Natural killer cell (primary cell): ENCODE measurements at regions of chr7 and their contacts with region 1.

Region 1: DNA sequence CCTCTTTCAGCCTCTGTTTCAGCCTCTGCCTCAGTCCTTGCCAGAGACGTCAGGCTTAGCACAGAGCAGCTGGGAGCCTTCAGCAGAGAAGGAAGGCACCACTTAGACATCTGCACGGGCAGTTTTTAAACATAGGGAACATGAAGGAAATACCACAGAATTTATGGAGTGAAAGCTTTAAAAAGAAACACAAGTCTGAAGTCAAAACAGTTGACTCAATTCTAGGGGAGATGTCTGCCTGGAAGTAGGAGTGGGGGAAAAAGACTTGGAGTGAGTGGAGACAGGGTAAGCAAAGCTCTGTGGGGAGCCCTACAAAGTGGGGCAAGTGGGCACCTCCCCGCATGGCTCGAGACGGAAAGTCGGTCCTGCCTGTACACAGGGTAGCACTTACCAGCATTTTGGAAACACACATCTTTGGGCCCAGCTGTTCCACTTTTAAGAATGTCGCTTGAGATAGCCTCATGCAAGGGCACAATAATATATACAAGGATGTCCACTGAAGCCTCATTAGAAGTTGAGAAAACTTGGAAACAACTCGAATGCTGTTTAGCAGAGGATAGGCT is 5.0 kb upstream of the TBXAS1 start:
- DNase-seq: no peak
- ATAC-seq: no peak
- H3K4me3 ChIP-seq: no peak overlapping the region
- H3K4me3 Mint-ChIP-seq: no peak overlapping the region
- H3K27ac ChIP-seq: no peak overlapping the region
- H3K27ac Mint-ChIP-seq: no peak overlapping the region
- H3K4me1 ChIP-seq: peaks cover 30% of the 10 kb centered on the region
- H3K4me1 Mint-ChIP-seq: peaks cover 11 to 22% of the 10 kb centered on the region in 2 donors
- H3K27me3 ChIP-seq: no peaks in the 10 kb centered on the region
- H3K27me3 Mint-ChIP-seq: no peaks in the 10 kb centered on the region
- CTCF ChIP-seq: no peak

Region 2: GRCh38 chr7:139855498-139856270 is 31.6 kb after region 1 on chr7:
- intact Hi-C with region 1: loop called (anchors 2 kb)
- DNase-seq: peak in 1 of 2 donors; percentile 33
- ATAC-seq: peak; percentile 58 to 79 (median 60)
- H3K4me3 ChIP-seq: no peak overlapping the region
- H3K4me3 Mint-ChIP-seq: peak overlapping the region; percentile 72
- H3K27ac ChIP-seq: peak overlapping the region; percentile 79
- H3K27ac Mint-ChIP-seq: peak overlapping the region; percentile 87 to 90
- H3K4me1 ChIP-seq: peaks cover 58% of the 10 kb centered on the region
- H3K4me1 Mint-ChIP-seq: peaks cover 65 to 77% of the 10 kb centered on the region in 2 donors
- H3K27me3 ChIP-seq: no peaks in the 10 kb centered on the region
- H3K27me3 Mint-ChIP-seq: no peaks in the 10 kb centered on the region
- CTCF ChIP-seq: no peak

Region 3: GRCh38 chr7:139869886-139870285 is 45.8 kb after region 1 on chr7:
- intact Hi-C with region 1: loop called (anchors 1 kb)
- DNase-seq: no peak
- ATAC-seq: no peak
- H3K4me3 ChIP-seq: no peak overlapping the region
- H3K4me3 Mint-ChIP-seq: peak overlapping the region; percentile 52
- H3K27ac ChIP-seq: no peak overlapping the region
- H3K27ac Mint-ChIP-seq: peak overlapping the region; percentile 70 to 83
- H3K4me1 ChIP-seq: peaks cover 41% of the 10 kb centered on the region
- H3K4me1 Mint-ChIP-seq: peaks cover 52 to 58% of the 10 kb centered on the region in 2 donors
- H3K27me3 ChIP-seq: no peaks in the 10 kb centered on the region
- H3K27me3 Mint-ChIP-seq: no peaks in the 10 kb centered on the region
- CTCF ChIP-seq: no peak

Region 4: DNA sequence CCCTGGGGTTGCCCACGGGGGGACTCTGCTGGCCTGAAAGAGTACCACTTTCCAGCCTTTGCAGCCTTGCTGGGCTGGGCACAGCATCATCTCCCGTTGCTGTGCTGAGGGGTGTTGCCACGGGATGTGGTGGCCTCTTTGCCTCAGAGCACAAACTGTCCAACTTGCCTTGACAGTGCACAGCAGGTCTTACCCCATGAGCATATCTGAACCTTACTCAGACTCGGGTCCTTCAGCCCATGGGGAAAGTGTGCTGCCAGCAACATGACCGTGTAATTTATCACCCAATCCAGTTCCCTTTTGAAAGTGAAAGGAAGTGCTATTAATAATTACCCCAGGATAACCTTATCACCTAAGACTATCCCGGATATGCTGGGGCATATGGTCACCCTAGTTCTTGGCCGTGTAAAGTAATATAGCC is 51.8 kb after region 1 on chr7:
- intact Hi-C with region 1: loop called (anchors 1 kb)
- DNase-seq: peak in 1 of 2 donors; percentile 56
- ATAC-seq: peak; percentile 66 to 80 (median 79)
- H3K4me3 ChIP-seq: no peak overlapping the region
- H3K4me3 Mint-ChIP-seq: peak overlapping the region; percentile 74
- H3K27ac ChIP-seq: peak overlapping the region; percentile 88
- H3K27ac Mint-ChIP-seq: peak overlapping the region; percentile 83
- H3K4me1 ChIP-seq: peaks cover 48% of the 10 kb centered on the region
- H3K4me1 Mint-ChIP-seq: peaks cover 73 to 81% of the 10 kb centered on the region in 2 donors
- H3K27me3 ChIP-seq: no peaks in the 10 kb centered on the region
- H3K27me3 Mint-ChIP-seq: no peaks in the 10 kb centered on the region
- CTCF ChIP-seq: no peak

Region 5: GRCh38 chr7:139889186-139889871 is 65.3 kb after region 1 on chr7:
- intact Hi-C with region 1: loop called (anchors 2 kb)
- DNase-seq: no peak
- ATAC-seq: no peak
- H3K4me3 ChIP-seq: no peak overlapping the region
- H3K4me3 Mint-ChIP-seq: no peak overlapping the region
- H3K27ac ChIP-seq: no peak overlapping the region
- H3K27ac Mint-ChIP-seq: peak overlapping the region; percentile 92 to 94
- H3K4me1 ChIP-seq: peaks cover 22% of the 10 kb centered on the region
- H3K4me1 Mint-ChIP-seq: peaks cover 57 to 60% of the 10 kb centered on the region in 2 donors
- H3K27me3 ChIP-seq: no peaks in the 10 kb centered on the region
- H3K27me3 Mint-ChIP-seq: no peaks in the 10 kb centered on the region
- CTCF ChIP-seq: no peak

Region 6: DNA sequence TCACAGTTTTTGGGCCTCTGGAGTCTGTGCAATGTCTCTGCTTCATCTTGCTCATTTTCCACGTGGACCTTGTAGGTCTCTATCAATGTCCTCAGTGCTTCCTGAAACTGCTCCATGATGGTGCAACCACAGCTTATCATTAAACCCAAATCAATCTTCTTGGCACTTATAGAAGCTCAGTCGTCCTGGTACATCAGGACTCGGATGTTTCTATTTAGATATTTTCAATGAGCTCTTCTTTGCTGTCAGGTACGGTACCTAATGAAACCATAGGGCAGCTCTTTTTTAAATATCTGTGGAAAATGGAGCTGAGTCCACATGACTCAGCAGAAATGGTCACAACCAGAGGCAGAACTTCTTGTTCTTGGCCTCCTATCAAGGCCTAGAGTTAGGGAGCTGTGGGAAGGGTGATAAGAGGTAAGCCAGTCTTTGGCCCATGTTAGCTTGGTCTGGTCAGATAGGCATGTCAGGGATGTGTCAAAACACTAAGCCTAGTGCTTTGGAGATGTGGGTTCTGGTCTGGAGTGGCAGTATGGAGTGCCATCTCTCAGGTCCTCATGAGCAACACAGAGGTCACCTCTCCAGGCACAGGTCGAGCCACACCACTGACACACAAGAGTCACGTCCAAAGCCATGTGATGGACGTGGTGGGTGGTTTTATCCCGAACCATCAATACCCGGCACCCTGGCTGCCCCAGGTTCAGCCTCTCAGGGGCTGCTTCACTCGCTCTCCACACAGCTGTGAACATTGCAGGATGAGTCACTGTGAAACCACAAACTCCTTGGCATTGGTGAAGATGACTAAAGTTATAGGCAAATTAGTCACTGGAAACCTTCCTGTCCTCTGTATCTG is 92.0 kb after region 1 on chr7:
- intact Hi-C with region 1: loop called (anchors 1 kb)
- DNase-seq: peak; percentile 49 to 69
- ATAC-seq: peak; percentile 86 to 93 (median 87)
- H3K4me3 ChIP-seq: no peak overlapping the region
- H3K4me3 Mint-ChIP-seq: peak overlapping the region; percentile 37
- H3K27ac ChIP-seq: peak overlapping the region; percentile 30
- H3K27ac Mint-ChIP-seq: peak overlapping the region; percentile 86 to 91
- H3K4me1 ChIP-seq: peaks cover 33% of the 10 kb centered on the region
- H3K4me1 Mint-ChIP-seq: peaks cover 44 to 58% of the 10 kb centered on the region in 2 donors
- H3K27me3 ChIP-seq: no peaks in the 10 kb centered on the region
- H3K27me3 Mint-ChIP-seq: no peaks in the 10 kb centered on the region
- CTCF ChIP-seq: no peak

Region 7: GRCh38 chr7:139950848-139951512 is 126.9 kb after region 1 on chr7:
- intact Hi-C with region 1: no loop called
- DNase-seq: no peak
- ATAC-seq: no peak
- H3K4me3 ChIP-seq: no peak overlapping the region
- H3K4me3 Mint-ChIP-seq: no peak overlapping the region
- H3K27ac ChIP-seq: no peak overlapping the region
- H3K27ac Mint-ChIP-seq: no peak overlapping the region
- H3K4me1 ChIP-seq: no peaks in the 10 kb centered on the region
- H3K4me1 Mint-ChIP-seq: peaks cover 0 to 4% of the 10 kb centered on the region in 2 donors
- H3K27me3 ChIP-seq: no peaks in the 10 kb centered on the region
- H3K27me3 Mint-ChIP-seq: no peaks in the 10 kb centered on the region
- CTCF ChIP-seq: no peak

Region 8: GRCh38 chr7:140079121-140079536 is 255.1 kb after region 1 on chr7:
- intact Hi-C with region 1: no loop called
- DNase-seq: no peak
- ATAC-seq: no peak
- H3K4me3 ChIP-seq: no peak overlapping the region
- H3K4me3 Mint-ChIP-seq: no peak overlapping the region
- H3K27ac ChIP-seq: no peak overlapping the region
- H3K27ac Mint-ChIP-seq: no peak overlapping the region
- H3K4me1 ChIP-seq: peaks cover 9% of the 10 kb centered on the region
- H3K4me1 Mint-ChIP-seq: peaks cover 28 to 29% of the 10 kb centered on the region in 2 donors
- H3K27me3 ChIP-seq: no peaks in the 10 kb centered on the region
- H3K27me3 Mint-ChIP-seq: peaks cover 0 to 6% of the 10 kb centered on the region in 2 donors
- CTCF ChIP-seq: no peak

Region 9: DNA sequence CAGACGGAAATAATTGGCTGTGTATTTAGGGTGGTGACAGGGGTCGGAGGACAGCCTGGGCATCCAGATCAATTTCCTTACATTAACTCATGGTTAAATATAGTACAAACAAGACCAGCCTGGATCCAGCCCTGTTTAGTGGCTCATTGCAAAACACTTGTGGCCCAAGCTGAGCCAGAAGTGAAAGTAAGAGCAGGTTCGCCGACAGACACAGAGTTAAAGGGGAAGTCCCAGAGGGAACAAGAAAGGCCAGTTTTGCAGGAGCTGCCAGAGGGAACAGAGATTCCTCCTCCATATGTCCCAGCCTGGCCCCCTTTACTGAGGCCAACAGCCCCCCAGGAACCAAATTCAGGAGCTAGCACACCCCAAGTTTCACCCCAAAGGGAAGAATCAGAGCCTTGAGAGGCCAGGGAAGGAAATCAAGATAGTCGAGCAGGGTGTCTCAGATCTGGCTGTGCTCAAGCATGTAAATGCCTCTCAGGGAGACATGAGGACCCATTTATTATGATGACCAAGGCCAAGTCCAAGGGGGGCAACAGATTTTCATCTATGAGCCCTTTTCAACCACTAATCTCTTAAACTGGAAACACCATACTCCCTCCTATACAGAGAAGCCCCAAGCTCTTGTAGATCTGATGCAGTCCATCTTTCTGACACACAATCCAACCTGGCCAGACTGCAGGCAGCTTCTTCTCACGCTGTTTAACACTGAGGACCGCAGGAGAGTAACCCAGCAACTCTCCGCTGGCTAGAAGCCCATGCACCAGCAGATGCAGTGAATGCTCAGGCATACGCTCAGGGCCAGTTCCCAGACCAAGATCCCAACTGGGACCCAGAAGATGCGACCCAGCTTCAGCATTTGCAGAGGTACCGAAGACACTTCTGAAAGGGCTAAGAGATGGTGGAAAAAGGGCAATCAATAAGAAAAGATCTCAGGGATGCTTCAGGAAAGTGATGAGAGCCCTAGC is 832.8 kb after region 1 on chr7:
- intact Hi-C with region 1: no loop called
- DNase-seq: peak in 1 of 2 donors; percentile 68
- ATAC-seq: peak; percentile 84 to 89 (median 84)
- H3K4me3 ChIP-seq: no peak overlapping the region
- H3K4me3 Mint-ChIP-seq: peak overlapping the region; percentile 92
- H3K27ac ChIP-seq: peak overlapping the region; percentile 26
- H3K27ac Mint-ChIP-seq: peak overlapping the region; percentile 85 to 86
- H3K4me1 ChIP-seq: peaks cover 14% of the 10 kb centered on the region
- H3K4me1 Mint-ChIP-seq: peaks cover 25 to 30% of the 10 kb centered on the region in 2 donors
- H3K27me3 ChIP-seq: no peaks in the 10 kb centered on the region
- H3K27me3 Mint-ChIP-seq: peaks cover 0 to 14% of the 10 kb centered on the region in 2 donors
- CTCF ChIP-seq: no peak